Activated T-helper 1 cell treated with anti-CD3 and anti-CD28 coated beads, Interleukin-12 subunit alpha, Interleukin-12 subunit beta, Interleukin-2, Interleukin-4 antibody, amounts not matched to agents 30 ng/mL and 10 ng/mL and 1 ng/mL, durations not matched to agents 14 hours and 24 hours and 36 hours (primary cell): ENCODE measurements at regions of chr5 and their contacts with region 1.

Region 1: GRCh38 chr5:60677844-60678664 is 21.9 kb downstream of the DEPDC1B start:
- DNase-seq: no peak
- H3K4me3 Mint-ChIP-seq: no peak overlapping the region
- H3K27ac Mint-ChIP-seq: no peak overlapping the region
- H3K4me1 Mint-ChIP-seq: peaks cover 12% of the 10 kb centered on the region
- H3K27me3 Mint-ChIP-seq: no peaks in the 10 kb centered on the region

Region 2: GRCh38 chr5:60843936-60844905 is 166.2 kb after region 1 on chr5 and contains the start of gene ELOVL7:
- intact Hi-C with region 1: loop called (anchors 5 kb)
- DNase-seq: peak; percentile 37
- H3K4me3 Mint-ChIP-seq: peak within 1 kb of the TSS; percentile 84
- H3K27ac Mint-ChIP-seq: no peak within 1 kb of the TSS
- H3K4me1 Mint-ChIP-seq: peaks cover 12% of the 10 kb centered on the region
- H3K27me3 Mint-ChIP-seq: peaks cover 63% of the 10 kb centered on the region
- total RNA-seq, gene ELOVL7: 0.34 and 0.49 TPM in 2 replicates

Region 3: GRCh38 chr5:60929024-60929423 is 251.0 kb after region 1 on chr5:
- intact Hi-C with region 1: loop called (anchors 2 kb)
- DNase-seq: no peak
- H3K4me3 Mint-ChIP-seq: no peak overlapping the region
- H3K27ac Mint-ChIP-seq: no peak overlapping the region
- H3K4me1 Mint-ChIP-seq: no peaks in the 10 kb centered on the region
- H3K27me3 Mint-ChIP-seq: no peaks in the 10 kb centered on the region

Region 4: DNA sequence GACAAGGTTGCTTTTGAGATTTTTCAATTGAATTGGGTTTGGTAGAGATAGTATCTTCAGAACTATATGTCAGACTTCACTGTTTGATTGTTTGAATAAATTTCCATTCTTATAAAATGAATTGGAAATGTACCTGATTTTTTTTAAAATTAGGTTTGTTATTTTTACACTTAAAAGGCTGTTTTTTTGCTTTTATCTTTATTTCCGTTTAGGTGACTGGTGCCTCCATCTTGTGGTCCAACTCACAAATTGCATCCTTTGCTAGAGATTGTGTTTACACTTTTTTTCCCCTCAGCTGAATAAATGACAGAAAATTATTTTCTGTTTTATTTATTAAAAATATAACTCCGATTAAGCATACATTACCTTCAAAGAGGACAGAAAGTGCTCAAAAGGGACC is 282.5 kb after region 1 on chr5:
- intact Hi-C with region 1: loop called (anchors 1 kb)
- DNase-seq: no peak
- H3K4me3 Mint-ChIP-seq: no peak overlapping the region
- H3K27ac Mint-ChIP-seq: no peak overlapping the region
- H3K4me1 Mint-ChIP-seq: no peaks in the 10 kb centered on the region
- H3K27me3 Mint-ChIP-seq: no peaks in the 10 kb centered on the region